K562 (cell line): ENCODE measurements at regions of chr7 and their contacts with region 1.

Region 1: DNA sequence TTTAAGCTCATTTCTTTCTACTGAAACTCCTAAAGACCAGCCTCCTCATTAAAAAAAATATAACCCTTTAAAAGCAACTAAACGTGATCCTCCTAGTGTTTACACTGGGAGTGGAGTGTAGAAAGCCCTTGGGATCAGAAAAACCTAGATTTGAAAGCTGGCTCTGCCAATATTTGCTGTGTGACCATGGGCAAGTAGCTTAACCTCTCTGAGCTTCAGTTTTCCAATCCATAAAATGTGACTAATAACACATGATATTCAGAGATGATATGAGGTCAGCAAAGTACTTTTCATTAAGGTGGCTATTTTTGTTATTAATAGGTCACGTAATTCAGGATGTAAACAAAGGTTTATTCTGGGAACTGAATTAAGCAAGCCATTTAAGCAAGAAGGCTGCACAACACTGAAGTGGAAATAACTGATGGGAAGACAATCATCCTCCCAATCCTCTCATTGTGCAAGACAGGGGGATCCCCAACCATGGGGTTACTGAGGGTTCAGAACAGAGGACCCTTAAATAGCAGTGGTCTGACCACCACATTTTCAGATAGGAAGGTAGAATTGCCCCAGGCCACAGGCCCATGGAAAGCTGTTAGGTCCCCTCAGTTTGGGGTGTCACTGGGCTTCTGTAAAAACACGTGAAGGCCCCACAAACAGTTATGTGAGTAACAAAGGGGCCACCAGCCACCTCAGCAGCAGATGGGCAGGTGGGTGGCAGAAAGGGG is 49.1 kb upstream of the EEPD1 start:
- DNase-seq: no peak
- ATAC-seq: no peak
- H3K4me3 ChIP-seq: no peak overlapping the region
- H3K27ac ChIP-seq: no peak overlapping the region
- H3K4me1 ChIP-seq: peaks cover 5% of the 10 kb centered on the region in 2 experiments; a peak in 2 of 5 replicates
- H3K27me3 ChIP-seq: peaks cover 0 to 4% of the 10 kb centered on the region in 2 experiments; a peak in 1 of 5 replicates
- CTCF ChIP-seq: no peak
- EP300 ChIP-seq: no peak
- POLR2A ChIP-seq: no peak
- RAD21 ChIP-seq: no peak

Region 2: DNA sequence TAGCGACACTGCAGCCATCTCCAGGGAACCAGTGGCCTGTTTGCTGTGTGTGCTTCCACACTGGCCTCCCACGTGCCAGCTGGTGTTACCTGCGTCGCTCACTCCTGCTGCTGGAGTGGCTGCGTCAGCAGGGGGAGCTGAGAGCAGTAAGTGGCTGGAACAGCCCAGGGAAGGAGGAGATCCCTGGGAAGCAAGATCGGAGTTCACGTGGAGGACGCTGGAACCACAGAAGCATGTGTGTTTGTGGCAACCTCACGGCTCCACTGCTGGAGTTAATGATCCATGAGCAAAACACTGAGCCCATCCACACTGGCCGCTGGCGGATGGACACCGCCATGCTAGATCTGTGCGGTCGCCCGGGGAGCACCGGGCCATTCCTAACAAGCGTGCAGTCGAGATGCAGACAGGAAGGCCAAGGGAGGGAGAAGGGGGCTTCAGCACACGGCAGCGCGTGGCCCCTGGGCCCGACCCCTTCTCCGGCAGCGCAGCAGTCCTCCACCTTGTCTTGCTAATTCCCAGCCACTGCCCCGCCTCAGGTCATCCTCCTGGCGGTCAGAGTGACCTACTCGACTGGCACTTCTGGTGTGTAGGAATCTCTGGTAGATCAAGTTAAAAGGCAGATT is 19.4 kb before region 1 on chr7:
- CTCF ChIA-PET with region 1: no interaction called
- POLR2A ChIA-PET with region 1: no interaction called
- in situ Hi-C with region 1: no loop called
- intact Hi-C with region 1: no loop called
- DNase-seq: peak; percentile 37 to 52 (median 45)
- ATAC-seq: peak; percentile 88
- H3K4me3 ChIP-seq: no peak overlapping the region
- H3K27ac ChIP-seq: no peak overlapping the region
- H3K4me1 ChIP-seq: peaks cover 0 to 11% of the 10 kb centered on the region in 2 experiments; a peak in 2 of 5 replicates
- H3K27me3 ChIP-seq: peaks cover 12 to 49% of the 10 kb centered on the region in 2 experiments
- CTCF ChIP-seq: peak; percentile 35 to 55 (median 54)
- EP300 ChIP-seq: no peak
- POLR2A ChIP-seq: no peak
- RAD21 ChIP-seq: peak; percentile 49 to 64; a peak in 3 of 4 replicates

Region 3: DNA sequence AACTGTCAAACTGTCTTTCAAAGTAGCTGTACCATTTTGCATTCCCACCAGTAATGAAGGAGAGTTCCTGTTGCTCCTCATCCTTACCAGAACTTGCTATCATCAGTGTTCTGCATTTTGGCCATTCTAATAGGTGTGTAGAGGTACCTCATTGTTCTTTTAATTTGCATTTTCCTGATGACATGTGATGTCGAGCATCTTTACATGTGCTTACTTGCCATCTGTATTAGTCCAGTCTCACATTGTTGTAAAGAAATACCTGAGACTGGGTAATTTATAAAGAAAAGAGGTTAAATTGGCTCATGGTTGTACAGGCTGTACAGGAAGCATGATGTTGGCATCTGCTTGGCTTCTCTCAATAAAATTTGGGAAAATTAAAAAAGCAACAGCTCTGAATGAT is 10.4 kb after region 1 on chr7:
- CTCF ChIA-PET with region 1: no interaction called
- POLR2A ChIA-PET with region 1: interaction called, 3 read pairs
- in situ Hi-C with region 1: no loop called
- intact Hi-C with region 1: loop called (anchors 1 kb)
- DNase-seq: no peak
- ATAC-seq: no peak
- H3K4me3 ChIP-seq: no peak overlapping the region
- H3K27ac ChIP-seq: no peak overlapping the region
- H3K4me1 ChIP-seq: no peaks in the 10 kb centered on the region
- H3K27me3 ChIP-seq: peaks cover 14 to 26% of the 10 kb centered on the region in 2 experiments; a peak in 4 of 5 replicates
- CTCF ChIP-seq: no peak
- EP300 ChIP-seq: no peak
- POLR2A ChIP-seq: no peak
- RAD21 ChIP-seq: no peak